Activated naive CD4-positive, alpha-beta T cell treated with anti-CD3 and anti-CD28 coated beads for 36 hours (primary cell): ENCODE measurements at regions of chr14 and their contacts with region 1.

Region 1: GRCh38 chr14:96584199-96584906 is 82.2 kb downstream of the PAPOLA start:
- DNase-seq: peak; percentile 54
- H3K4me3 Mint-ChIP-seq: no peak overlapping the region
- H3K27ac Mint-ChIP-seq: no peak overlapping the region
- H3K4me1 Mint-ChIP-seq: no peaks in the 10 kb centered on the region
- H3K27me3 Mint-ChIP-seq: peaks cover 13% of the 10 kb centered on the region

Region 2: DNA sequence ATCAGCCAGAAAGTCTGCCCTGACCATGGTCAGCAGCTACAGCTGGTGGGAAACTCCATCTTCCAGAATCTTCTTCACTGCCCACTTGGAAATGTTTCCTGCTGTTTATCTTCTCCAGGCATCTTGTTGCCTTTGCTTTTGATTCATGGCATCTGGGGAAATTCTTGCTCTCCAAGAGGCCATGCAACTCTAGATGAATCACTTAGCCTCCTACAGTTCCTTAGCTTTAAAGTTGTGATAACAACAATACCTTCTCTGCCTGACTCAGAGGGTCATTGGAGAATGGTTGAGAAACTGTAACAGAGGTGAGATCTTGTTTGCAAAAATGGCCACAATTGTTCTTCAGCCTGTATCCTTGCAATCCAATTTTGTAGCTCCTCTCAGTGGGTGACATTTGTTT is 91.8 kb after region 1 on chr14:
- CTCF ChIA-PET with region 1: no interaction called
- intact Hi-C with region 1: loop called (anchors 5 kb)
- DNase-seq: no peak
- H3K4me3 Mint-ChIP-seq: no peak overlapping the region
- H3K27ac Mint-ChIP-seq: no peak overlapping the region
- H3K4me1 Mint-ChIP-seq: no peaks in the 10 kb centered on the region
- H3K27me3 Mint-ChIP-seq: peaks cover 4% of the 10 kb centered on the region

Region 3: GRCh38 chr14:96741151-96741977 is 157.0 kb after region 1 on chr14:
- CTCF ChIA-PET with region 1: interaction called, 12 read pairs
- intact Hi-C with region 1: loop called (anchors 1 kb)
- DNase-seq: peak; percentile 77
- H3K4me3 Mint-ChIP-seq: peak overlapping the region; percentile 60
- H3K27ac Mint-ChIP-seq: no peak overlapping the region
- H3K4me1 Mint-ChIP-seq: peaks cover 5% of the 10 kb centered on the region
- H3K27me3 Mint-ChIP-seq: peaks cover 67% of the 10 kb centered on the region